Activated T-helper 1 cell treated with anti-CD3 and anti-CD28 coated beads, Interleukin-12 subunit alpha, Interleukin-12 subunit beta, Interleukin-2, Interleukin-4 antibody, amounts not matched to agents 30 ng/mL and 10 ng/mL and 1 ng/mL, durations not matched to agents 14 hours and 24 hours and 36 hours (primary cell): ENCODE measurements at regions of chr7 and their contacts with region 1.

Region 1: DNA sequence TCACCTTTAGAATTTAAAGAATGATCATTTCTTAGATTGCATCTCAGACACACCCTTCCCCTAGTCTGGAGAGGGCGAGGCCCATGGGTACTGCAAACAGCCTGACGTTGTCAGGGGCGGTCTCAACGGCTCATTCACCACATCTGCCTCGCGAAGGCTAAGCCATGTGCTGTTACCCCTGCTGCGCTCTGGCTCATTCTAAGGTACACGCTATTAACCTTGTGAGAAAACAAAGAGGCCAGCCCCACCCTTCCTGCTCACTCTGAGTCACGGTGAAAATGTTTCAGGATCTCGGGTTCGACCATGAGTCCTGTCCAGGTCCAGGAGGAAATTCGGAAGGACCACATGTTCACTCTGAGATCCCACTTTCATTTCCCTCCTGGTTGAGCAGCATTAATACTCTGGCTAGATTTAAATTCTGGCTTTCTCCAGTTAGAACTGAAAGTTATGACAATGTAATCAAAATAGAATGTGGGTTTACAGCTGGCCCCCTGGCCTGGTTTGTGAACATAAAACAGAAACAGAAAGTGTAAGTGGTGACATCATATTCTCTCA is 55.2 kb downstream of the EGFR start:
- DNase-seq: peak; percentile 9
- H3K4me3 Mint-ChIP-seq: no peak overlapping the region
- H3K27ac Mint-ChIP-seq: peak overlapping the region; percentile 6
- H3K4me1 Mint-ChIP-seq: peaks cover 17% of the 10 kb centered on the region
- H3K27me3 Mint-ChIP-seq: peaks cover 12% of the 10 kb centered on the region

Region 2: GRCh38 chr7:55086413-55087201 is 12.6 kb after region 1 on chr7:
- intact Hi-C with region 1: loop called (anchors 2 kb)
- DNase-seq: no peak
- H3K4me3 Mint-ChIP-seq: peak overlapping the region; percentile 52
- H3K27ac Mint-ChIP-seq: peak overlapping the region; percentile 51
- H3K4me1 Mint-ChIP-seq: peaks cover 25% of the 10 kb centered on the region
- H3K27me3 Mint-ChIP-seq: peaks cover 29% of the 10 kb centered on the region

Region 3: GRCh38 chr7:55132890-55133551 is 59.0 kb after region 1 on chr7:
- intact Hi-C with region 1: loop called (anchors 1 kb)
- DNase-seq: no peak
- H3K4me3 Mint-ChIP-seq: no peak overlapping the region
- H3K27ac Mint-ChIP-seq: peak overlapping the region; percentile 37
- H3K4me1 Mint-ChIP-seq: peaks cover 22% of the 10 kb centered on the region
- H3K27me3 Mint-ChIP-seq: peaks cover 4% of the 10 kb centered on the region